ENCODE measurements at regions of chr9 and their contacts with region 1.

Region 1: GRCh38 chr9:35603987-35604577 is 980 bp upstream of the TESK1 start:
- DNase-seq: peak; percentile 100
- H3K4me3 Mint-ChIP-seq: peak overlapping the region; percentile 90
- H3K27ac Mint-ChIP-seq: peak overlapping the region; percentile 96
- H3K4me1 Mint-ChIP-seq: peaks cover 22% of the 10 kb centered on the region
- H3K27me3 Mint-ChIP-seq: no peaks in the 10 kb centered on the region

Region 2: DNA sequence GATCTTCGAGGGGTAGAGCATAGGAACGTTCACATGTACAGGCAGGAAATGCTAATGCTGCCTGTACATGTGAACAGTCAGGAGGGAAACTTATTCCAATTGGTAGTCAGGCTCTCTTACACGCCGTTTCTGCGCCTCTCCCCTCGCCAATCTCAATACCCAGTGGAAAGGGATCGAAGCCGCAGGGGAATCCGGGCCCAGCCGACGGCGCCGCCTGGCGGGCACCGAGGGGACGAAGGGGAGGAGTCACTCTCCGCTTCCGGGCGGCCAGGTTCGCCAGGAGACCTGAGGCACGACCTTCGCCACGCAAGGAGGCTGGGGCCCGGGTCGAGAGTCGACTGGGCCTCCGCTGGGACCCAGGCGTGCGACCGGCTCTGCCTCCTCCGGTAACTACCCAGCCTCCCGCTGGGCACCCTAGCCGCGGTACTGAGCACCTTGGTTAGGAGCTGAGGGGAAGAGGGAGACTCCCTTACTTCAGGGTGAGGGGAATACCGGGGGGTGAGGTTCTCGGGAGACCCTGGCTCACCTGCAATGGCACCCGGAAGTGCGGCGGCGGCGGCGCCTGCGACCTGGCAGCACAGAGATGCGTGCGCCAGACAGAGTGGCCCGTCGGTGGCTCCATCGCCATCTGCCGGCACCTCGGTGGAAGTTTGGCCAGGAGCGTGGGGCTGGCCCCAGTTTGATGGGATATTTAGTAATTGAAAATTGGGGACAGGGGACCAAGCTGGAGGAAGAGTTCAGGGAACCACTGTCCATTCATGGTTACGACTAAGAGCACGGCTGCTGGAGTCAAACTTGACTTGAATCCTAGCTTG is 507.8 kb before region 1 on chr9 and contains the start of gene PIGO:
- intact Hi-C with region 1: loop called (anchors 5 kb)
- DNase-seq: peak; percentile 97
- H3K4me3 Mint-ChIP-seq: peak within 1 kb of the TSS; percentile 91
- H3K27ac Mint-ChIP-seq: peak within 1 kb of the TSS; percentile 95
- H3K4me1 Mint-ChIP-seq: peaks cover 28% of the 10 kb centered on the region
- H3K27me3 Mint-ChIP-seq: no peaks in the 10 kb centered on the region
- total RNA-seq, gene PIGO: 32.5 and 37.2 TPM in 2 replicates

Region 3: GRCh38 chr9:35116898-35117551 is 487.1 kb before region 1 on chr9:
- intact Hi-C with region 1: loop called (anchors 1 kb)
- DNase-seq: peak; percentile 96
- H3K4me3 Mint-ChIP-seq: peak overlapping the region; percentile 91
- H3K27ac Mint-ChIP-seq: peak overlapping the region; percentile 94
- H3K4me1 Mint-ChIP-seq: peaks cover 37% of the 10 kb centered on the region
- H3K27me3 Mint-ChIP-seq: peaks cover 2% of the 10 kb centered on the region

Region 4: GRCh38 chr9:35569206-35569605 is 34.9 kb before region 1 on chr9:
- intact Hi-C with region 1: no loop called
- DNase-seq: no peak
- H3K4me3 Mint-ChIP-seq: no peak overlapping the region
- H3K27ac Mint-ChIP-seq: no peak overlapping the region
- H3K4me1 Mint-ChIP-seq: peaks cover 28% of the 10 kb centered on the region
- H3K27me3 Mint-ChIP-seq: no peaks in the 10 kb centered on the region

Region 5: GRCh38 chr9:35646533-35647265 is 42.6 kb after region 1 on chr9:
- intact Hi-C with region 1: loop called (anchors 1 kb)
- DNase-seq: peak; percentile 98
- H3K4me3 Mint-ChIP-seq: peak overlapping the region; percentile 92
- H3K27ac Mint-ChIP-seq: peak overlapping the region; percentile 96
- H3K4me1 Mint-ChIP-seq: peaks cover 41% of the 10 kb centered on the region
- H3K27me3 Mint-ChIP-seq: no peaks in the 10 kb centered on the region

Region 6: DNA sequence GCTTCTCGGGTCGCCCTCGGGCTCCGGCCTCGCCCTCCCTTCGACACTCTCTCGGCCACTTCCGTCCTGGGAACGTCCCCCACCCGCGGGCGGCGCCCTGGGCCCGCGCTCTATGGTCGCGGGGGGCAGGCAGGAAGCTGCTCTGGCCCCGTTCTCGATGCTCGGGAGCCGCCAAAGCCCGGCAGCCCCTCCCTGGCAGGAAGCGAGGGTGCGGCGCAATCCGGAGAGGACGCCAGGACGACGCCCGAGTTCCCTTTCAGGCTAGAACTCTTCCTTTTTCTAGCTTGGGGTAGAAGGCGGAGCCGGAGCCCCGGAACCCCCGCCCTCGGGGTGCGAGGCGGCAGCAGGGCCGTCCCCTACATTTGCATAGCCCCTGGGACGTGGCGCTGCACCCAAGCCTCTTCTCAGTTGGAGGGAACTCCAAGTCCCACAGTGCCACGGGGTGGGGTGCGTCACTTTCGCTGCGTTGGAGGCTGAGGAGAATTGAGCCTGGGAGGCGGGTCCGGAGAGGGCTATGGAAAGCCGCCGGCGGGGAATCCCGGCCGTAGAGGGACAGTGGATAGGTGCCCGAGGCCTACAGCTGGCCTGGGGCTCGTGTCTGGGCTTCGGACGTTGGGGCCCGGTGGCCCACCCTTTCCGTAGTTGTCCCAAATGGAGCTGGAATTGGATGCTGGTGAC is 128.2 kb after region 1 on chr9 and contains the starts of genes CREB3 and TLN1:
- intact Hi-C with region 1: loop called (anchors 1 kb)
- DNase-seq: peak; percentile 99
- H3K4me3 Mint-ChIP-seq: no peak within 1 kb of the TSS
- H3K27ac Mint-ChIP-seq: peak within 1 kb of the TSS; percentile 92
- H3K4me1 Mint-ChIP-seq: peaks cover 22% of the 10 kb centered on the region
- H3K27me3 Mint-ChIP-seq: no peaks in the 10 kb centered on the region
- total RNA-seq, gene CREB3: 27.0 and 27.6 TPM in 2 replicates
- total RNA-seq, gene TLN1: 220 and 243 TPM in 2 replicates

Region 7: GRCh38 chr9:35829084-35829763 is 225.1 kb after region 1 on chr9 and contains the start of gene TMEM8B:
- intact Hi-C with region 1: loop called (anchors 5 kb)
- DNase-seq: peak; percentile 97
- H3K4me3 Mint-ChIP-seq: peak within 1 kb of the TSS; percentile 93
- H3K27ac Mint-ChIP-seq: peak within 1 kb of the TSS; percentile 86
- H3K4me1 Mint-ChIP-seq: peaks cover 29% of the 10 kb centered on the region
- H3K27me3 Mint-ChIP-seq: peaks cover 6% of the 10 kb centered on the region
- total RNA-seq, gene TMEM8B: 2.0 and 2.3 TPM in 2 replicates